Colonic mucosa (tissue), 4 donors: ENCODE measurements at regions of chr1 and their contacts with region 1.

Region 1: DNA sequence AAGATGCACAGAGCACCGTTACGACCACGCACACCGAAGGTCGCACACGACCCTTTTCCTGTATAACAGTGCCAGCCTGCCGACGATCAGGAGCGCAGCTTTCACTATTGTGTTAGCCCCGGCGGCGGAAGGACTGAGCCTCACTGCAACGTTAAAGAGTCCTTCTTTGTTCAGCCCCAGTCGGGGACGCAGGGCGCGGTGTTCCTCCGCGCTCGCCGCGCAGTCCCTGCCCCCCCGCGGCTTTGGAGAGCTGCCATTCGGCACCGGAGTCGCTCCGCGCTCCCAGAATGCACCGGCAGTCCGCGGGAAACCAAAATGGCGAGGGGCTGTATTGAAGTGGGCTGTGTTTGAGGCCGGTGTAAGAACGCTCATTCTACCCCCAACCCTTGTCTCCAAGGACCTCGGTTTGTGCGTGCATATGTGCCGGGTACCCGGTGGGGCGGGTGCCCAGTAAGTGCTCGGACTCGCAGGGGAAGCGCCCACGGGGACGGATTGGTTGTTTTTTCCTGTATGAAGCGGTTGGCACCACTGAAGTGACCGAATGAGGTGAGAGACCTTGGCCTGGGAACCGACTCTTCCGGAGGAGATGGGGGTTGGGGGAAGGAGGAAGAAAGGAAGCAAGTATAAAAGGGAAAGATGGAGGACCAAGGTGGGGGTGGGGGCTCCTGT is at the start of gene MTF2:
- DNase-seq: peak; percentile 97
- H3K4me3 ChIP-seq: peak within 1 kb of the TSS; percentile 81
- H3K27ac ChIP-seq: peak within 1 kb of the TSS; percentile 63
- H3K4me1 ChIP-seq: peaks cover 5% of the 10 kb centered on the region
- H3K27me3 ChIP-seq: no peaks in the 10 kb centered on the region
- CTCF ChIP-seq: no peak
- total RNA-seq, gene MTF2: 26.5 to 33.4 TPM

Region 2: DNA sequence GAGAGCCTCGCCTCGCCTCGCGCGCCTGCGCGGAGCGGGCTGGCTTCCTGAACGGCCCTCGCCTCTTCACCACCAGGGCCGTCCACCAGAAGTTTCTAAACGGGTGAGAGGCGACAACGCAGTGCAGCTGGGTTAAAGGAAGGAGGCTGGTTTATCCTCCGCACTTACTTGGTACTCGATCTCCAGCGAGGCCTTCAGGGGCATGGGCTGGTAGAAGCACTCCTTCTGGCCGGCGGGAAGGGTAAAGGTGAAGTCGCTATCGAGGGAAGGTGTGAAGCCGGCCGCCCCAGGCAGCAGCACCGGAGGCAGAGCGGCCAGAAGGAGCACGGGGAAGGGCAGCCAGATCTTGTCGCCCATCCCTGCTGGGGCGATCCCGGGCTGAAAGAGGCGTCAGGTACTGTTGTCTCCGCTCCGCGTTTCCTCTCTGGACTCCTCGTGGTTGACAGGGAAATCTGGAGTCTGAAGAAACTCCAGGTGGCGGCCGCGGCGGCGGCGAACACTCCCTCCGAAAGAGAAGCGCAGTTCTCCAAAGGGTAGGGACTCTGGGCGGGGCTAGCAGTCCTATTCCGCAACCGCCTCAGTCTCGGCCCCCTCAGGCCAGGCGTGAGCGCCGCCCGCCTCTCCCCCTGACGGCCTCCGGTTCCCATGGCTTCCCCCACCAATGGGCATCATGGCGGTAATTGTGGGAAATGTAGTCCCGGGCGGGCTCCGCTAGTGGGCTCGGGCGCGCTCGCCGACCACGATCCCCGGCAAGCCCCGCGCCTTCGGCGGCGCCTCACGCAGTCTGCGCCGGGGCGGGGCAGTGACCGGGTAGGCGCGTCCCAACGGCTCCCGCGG is 101.0 kb after region 1 on chr1 and contains the start of gene TMED5:
- intact Hi-C with region 1: loop called (anchors 5 kb)
- DNase-seq: peak; percentile 98
- H3K4me3 ChIP-seq: peak within 1 kb of the TSS; percentile 83
- H3K27ac ChIP-seq: peak within 1 kb of the TSS; percentile 99
- H3K4me1 ChIP-seq: peaks cover 6% of the 10 kb centered on the region
- H3K27me3 ChIP-seq: no peaks in the 10 kb centered on the region
- CTCF ChIP-seq: no peak
- total RNA-seq, gene TMED5: 63.4 to 66.4 TPM